Activated T-helper 2 cell treated with anti-CD3 and anti-CD28 coated beads, Interferon-gamma antibody, Interleukin-2, Interleukin-4, amounts not matched to agents 10 μg/mL and 5 μg/mL and 100 μg/mL, durations not matched to agents 14 hours and 24 hours and 36 hours (primary cell): ENCODE measurements at regions of chr1 and their contacts with region 1.

Region 1: GRCh38 chr1:25037174-25038074 is 107.3 kb upstream of the RUNX3 start:
- DNase-seq: peak; percentile 43
- H3K4me3 Mint-ChIP-seq: no peak overlapping the region
- H3K27ac Mint-ChIP-seq: peak overlapping the region; percentile 0
- H3K4me1 Mint-ChIP-seq: peaks cover 36% of the 10 kb centered on the region
- H3K27me3 Mint-ChIP-seq: peaks cover 10% of the 10 kb centered on the region

Region 2: DNA sequence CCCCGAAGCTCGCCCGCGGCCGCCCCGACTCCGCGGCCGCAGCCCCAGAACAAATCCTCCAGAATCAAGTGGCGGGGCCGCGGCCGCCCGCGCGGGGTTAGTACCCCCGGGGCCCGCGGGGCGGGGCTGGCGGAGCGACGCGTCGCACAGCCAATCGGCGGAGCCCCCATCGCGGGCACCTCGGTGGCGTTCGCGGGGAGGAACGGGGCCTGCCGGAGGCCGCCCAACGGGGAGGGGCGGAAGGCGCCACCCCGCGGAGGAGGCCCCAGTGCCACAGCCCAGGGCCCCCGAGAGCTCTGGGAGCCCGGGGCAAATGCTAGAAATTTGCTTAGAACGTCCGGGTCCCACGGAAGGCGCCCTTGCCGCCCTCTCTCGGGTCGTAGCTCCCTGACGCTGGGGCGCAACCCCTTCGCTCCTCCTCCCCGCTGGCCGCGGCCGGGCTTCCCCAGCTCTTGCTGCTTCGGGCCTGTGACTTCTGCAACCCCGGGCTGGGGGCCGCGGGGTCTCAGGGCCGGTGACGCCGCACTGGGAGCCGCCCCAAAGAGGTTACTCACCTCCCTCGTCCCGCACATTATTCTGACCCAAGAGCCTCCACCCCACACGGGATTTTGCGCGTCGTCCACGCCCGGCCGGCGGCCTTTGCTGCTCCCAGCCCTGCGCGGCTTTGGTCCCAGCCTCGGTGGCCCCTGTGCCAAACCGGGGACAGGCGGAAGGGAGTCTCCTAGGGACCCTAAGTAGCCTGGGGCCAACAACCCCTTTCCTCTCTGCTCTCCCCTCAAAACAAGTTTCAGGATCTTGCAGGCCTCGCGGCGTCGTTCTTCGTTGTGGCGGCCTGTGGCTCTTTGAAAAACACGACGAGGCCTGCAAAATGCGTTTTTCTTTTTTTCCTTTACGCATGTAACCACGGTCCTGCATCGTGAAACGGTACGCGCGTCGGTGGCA is 106.9 kb before region 1 on chr1 and contains the start of gene RUNX3:
- intact Hi-C with region 1: loop called (anchors 1 kb)
- DNase-seq: peak; percentile 88
- H3K4me3 Mint-ChIP-seq: peak within 1 kb of the TSS; percentile 93
- H3K27ac Mint-ChIP-seq: peak within 1 kb of the TSS; percentile 67
- H3K4me1 Mint-ChIP-seq: peaks cover 61% of the 10 kb centered on the region
- H3K27me3 Mint-ChIP-seq: no peaks in the 10 kb centered on the region
- total RNA-seq, gene RUNX3: 129 and 135 TPM in 2 replicates

Region 3: GRCh38 chr1:24970926-24971875 is 66.2 kb before region 1 on chr1:
- intact Hi-C with region 1: no loop called
- DNase-seq: no peak
- H3K4me3 Mint-ChIP-seq: no peak overlapping the region
- H3K27ac Mint-ChIP-seq: peak overlapping the region; percentile 64
- H3K4me1 Mint-ChIP-seq: peaks cover 66% of the 10 kb centered on the region
- H3K27me3 Mint-ChIP-seq: no peaks in the 10 kb centered on the region

Region 4: DNA sequence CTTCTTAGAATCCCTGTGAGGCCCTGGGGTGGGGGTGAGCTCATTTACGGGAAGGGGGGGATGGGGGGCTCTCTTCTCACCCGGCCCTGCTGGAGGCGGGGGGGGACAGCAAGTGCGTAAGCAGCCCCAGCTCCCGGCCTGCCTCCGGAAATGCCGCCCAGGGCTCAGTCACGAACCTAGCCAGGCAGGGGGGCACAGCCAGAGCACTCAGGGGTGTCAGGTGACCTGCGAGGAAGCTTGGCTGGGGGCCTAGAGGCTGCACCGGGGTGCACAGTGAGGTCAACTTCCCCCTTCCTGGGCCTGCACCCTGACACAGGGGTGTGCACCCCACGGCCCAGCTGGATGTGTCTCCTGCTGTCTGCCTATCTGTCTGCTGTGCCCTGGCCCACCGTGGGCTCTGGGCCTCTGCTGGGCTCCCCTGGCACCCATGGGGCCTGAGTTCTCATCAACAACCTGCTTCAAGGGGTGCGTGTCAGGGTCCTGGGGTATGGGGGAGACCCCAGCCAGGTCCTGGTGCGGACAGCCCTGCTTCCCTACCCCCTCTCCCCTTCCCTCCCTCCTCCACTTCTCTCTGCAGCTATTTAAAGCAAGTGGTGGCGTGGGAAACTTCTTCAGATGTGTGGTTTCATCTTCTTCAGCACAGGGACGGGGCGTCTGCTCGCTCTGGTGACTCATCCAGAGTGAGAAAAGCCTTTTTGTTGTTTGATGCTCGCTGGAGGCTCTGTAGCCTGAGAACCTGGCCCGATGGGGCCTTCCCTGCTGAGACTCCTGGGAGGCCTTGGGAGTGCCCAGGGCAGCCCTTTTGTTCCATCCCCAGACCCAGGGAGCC is 14.8 kb before region 1 on chr1:
- intact Hi-C with region 1: loop called (anchors 2 kb)
- DNase-seq: peak; percentile 91
- H3K4me3 Mint-ChIP-seq: peak overlapping the region; percentile 76
- H3K27ac Mint-ChIP-seq: peak overlapping the region; percentile 96
- H3K4me1 Mint-ChIP-seq: peaks cover 87% of the 10 kb centered on the region
- H3K27me3 Mint-ChIP-seq: no peaks in the 10 kb centered on the region

Region 5: GRCh38 chr1:25099343-25099951 is 62.0 kb after region 1 on chr1:
- intact Hi-C with region 1: loop called (anchors 2 kb)
- DNase-seq: peak; percentile 36
- H3K4me3 Mint-ChIP-seq: peak overlapping the region; percentile 68
- H3K27ac Mint-ChIP-seq: peak overlapping the region; percentile 67
- H3K4me1 Mint-ChIP-seq: peaks cover 66% of the 10 kb centered on the region
- H3K27me3 Mint-ChIP-seq: peaks cover 5% of the 10 kb centered on the region

Region 6: DNA sequence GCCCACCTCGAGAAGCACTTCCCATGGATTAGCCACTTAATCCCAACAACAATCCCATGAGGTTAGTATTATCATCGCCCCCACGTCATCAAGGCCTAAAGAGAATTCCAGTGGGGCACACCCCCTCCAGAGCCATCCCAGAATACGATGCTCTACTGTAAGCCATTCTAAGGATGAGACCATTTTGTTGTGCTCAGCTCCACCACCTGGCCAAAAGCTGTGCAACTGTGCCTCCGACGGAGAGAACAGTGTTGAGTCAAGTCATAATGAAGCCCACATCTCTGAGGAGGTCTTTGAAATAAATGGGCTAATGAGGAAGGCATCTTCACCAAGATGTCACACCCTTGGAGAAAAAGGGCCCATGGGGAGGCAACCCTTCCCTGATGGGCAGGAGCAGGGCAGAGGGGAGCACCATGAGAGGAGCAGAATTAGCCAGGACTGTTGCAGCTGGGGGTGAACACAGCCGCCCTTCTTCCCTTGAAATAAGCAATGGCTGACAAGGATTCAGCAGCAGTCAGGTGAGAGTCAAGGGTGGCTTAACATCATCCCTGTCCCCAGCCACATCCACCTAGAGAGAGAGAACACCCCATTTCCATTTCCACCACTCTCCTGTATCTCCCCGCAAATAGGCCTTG is 180.3 kb after region 1 on chr1:
- intact Hi-C with region 1: no loop called
- DNase-seq: no peak
- H3K4me3 Mint-ChIP-seq: no peak overlapping the region
- H3K27ac Mint-ChIP-seq: no peak overlapping the region
- H3K4me1 Mint-ChIP-seq: peaks cover 1% of the 10 kb centered on the region
- H3K27me3 Mint-ChIP-seq: peaks cover under 1% of the 10 kb centered on the region